ENCODE measurements at regions of chr9 and their contacts with region 1.

Region 1: GRCh38 chr9:87698069-87698809 is 27.7 kb upstream of the CTSL start:
- DNase-seq: no peak
- H3K4me3 ChIP-seq: no peak overlapping the region
- H3K27ac ChIP-seq: no peak overlapping the region
- H3K4me1 ChIP-seq: no peaks in the 10 kb centered on the region
- H3K27me3 ChIP-seq: no peaks in the 10 kb centered on the region
- CTCF ChIP-seq: no peak

Region 2: DNA sequence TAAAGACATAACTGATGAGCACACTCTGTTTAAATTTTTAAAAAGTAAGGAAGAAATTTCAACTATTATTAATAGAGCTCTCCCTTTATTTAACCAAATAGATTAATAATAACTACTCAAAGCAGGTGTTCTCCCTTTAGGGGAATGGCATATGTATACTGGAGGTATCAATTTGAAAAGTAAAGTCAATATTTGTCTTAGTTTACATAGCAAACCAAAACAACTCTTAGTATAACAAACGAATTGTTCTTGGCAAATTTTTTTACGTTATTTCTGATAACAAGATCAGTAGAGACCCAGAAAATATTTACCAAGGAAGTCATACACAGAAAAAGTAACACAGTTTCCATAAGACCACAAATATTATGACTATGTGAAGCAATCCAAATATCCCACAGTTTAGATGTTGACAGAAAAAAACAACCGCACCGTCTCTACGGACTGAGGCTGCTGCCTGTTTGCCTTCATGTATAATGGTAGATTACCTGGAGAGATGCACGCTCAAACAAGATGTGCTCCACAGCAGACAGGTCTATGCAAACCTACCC is 247.1 kb before region 1 on chr9:
- intact Hi-C with region 1: no loop called
- DNase-seq: no peak
- H3K4me3 ChIP-seq: no peak overlapping the region
- H3K27ac ChIP-seq: no peak overlapping the region
- H3K4me1 ChIP-seq: no peaks in the 10 kb centered on the region
- H3K27me3 ChIP-seq: peaks cover 0 to 5% of the 10 kb centered on the region in 2 donors
- CTCF ChIP-seq: no peak

Region 3: GRCh38 chr9:87742813-87743428 is 44.7 kb after region 1 on chr9:
- intact Hi-C with region 1: loop called (anchors 10 kb)
- DNase-seq: no peak
- H3K4me3 ChIP-seq: no peak overlapping the region
- H3K27ac ChIP-seq: no peak overlapping the region
- H3K4me1 ChIP-seq: no peaks in the 10 kb centered on the region
- H3K27me3 ChIP-seq: peaks cover 0 to 4% of the 10 kb centered on the region in 2 donors
- CTCF ChIP-seq: no peak

Region 4: DNA sequence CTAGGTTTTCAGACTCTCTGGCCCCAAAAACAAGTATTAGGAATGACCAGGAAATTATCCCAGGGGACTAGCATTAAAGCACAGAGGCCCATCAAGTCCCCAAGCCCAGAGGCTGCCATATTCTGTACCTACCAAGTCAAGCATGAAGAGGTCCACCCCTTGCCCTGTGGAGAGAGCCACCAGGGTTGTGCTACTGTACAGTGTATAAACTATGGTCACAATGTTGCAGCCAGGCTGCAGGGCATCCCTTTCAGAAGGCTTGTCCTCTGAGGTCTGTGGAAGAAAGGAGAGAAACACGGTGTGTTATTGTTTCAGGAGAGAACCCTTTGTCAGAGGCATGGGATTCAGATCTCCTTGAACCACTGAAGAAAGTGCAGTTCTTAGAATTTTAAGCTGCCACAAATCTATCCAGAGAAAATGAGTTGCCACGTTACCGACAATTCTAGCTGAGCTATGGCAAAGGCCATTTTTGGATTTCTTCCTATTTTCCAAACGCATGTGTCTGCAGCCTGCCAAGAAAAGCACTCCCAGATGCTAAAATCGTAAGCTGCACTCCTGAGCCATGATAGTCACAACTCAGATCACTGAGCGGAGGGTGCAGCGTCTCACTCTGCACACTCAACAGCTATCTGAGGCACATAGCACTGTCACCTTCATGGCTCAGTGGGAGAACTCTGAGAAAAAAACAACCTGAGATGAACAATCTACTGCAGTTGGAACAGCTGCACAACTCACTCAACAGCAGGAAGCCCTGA is 138.9 kb after region 1 on chr9:
- intact Hi-C with region 1: no loop called
- DNase-seq: no peak
- H3K4me3 ChIP-seq: no peak overlapping the region
- H3K27ac ChIP-seq: no peak overlapping the region
- H3K4me1 ChIP-seq: peaks cover 0 to 13% (median 5%) of the 10 kb centered on the region in 4 donors
- H3K27me3 ChIP-seq: peaks cover 0 to 4% of the 10 kb centered on the region in 2 donors
- CTCF ChIP-seq: no peak